Activated CD4-positive, alpha-beta memory T cell treated with anti-CD3 and anti-CD28 coated beads for 36 hours (primary cell): ENCODE measurements at regions of chr15 and their contacts with region 1.

Region 1: GRCh38 chr15:59917504-59918157 is 86.5 kb upstream of the FOXB1 start:
- DNase-seq: peak; percentile 85
- H3K4me3 Mint-ChIP-seq: no peak overlapping the region
- H3K27ac Mint-ChIP-seq: no peak overlapping the region
- H3K4me1 Mint-ChIP-seq: peaks cover 26% of the 10 kb centered on the region
- H3K27me3 Mint-ChIP-seq: peaks cover 3% of the 10 kb centered on the region

Region 2: DNA sequence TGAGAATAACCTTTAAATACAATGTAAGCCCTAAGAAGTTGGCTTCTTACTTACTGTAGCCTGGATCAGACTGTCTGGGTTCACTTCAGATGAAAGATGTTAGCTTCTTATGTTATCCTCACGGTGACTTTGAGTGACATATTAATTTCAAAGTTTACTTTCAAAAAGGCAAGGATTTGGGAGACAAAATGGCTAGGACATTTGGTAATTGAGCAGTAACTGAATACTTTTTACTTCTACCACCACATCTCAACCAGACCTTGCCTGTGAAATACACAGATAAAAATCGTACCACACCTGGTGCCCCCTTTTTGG is 192.5 kb before region 1 on chr15:
- CTCF ChIA-PET with region 1: interaction called, 27 read pairs
- POLR2A ChIA-PET with region 1: no interaction called
- intact Hi-C with region 1: loop called (anchors 5 kb)
- DNase-seq: no peak
- H3K4me3 Mint-ChIP-seq: no peak overlapping the region
- H3K27ac Mint-ChIP-seq: no peak overlapping the region
- H3K4me1 Mint-ChIP-seq: no peaks in the 10 kb centered on the region
- H3K27me3 Mint-ChIP-seq: peaks cover 7% of the 10 kb centered on the region

Region 3: GRCh38 chr15:59797756-59798604 is 119.7 kb before region 1 on chr15:
- CTCF ChIA-PET with region 1: interaction called, 3 read pairs
- POLR2A ChIA-PET with region 1: no interaction called
- intact Hi-C with region 1: loop called (anchors 5 kb)
- DNase-seq: no peak
- H3K4me3 Mint-ChIP-seq: peak overlapping the region; percentile 9
- H3K27ac Mint-ChIP-seq: peak overlapping the region; percentile 19
- H3K4me1 Mint-ChIP-seq: peaks cover 66% of the 10 kb centered on the region
- H3K27me3 Mint-ChIP-seq: no peaks in the 10 kb centered on the region

Region 4: GRCh38 chr15:59997070-59997701 is 79.6 kb after region 1 on chr15:
- CTCF ChIA-PET with region 1: interaction called, 27 read pairs
- POLR2A ChIA-PET with region 1: no interaction called
- intact Hi-C with region 1: loop called (anchors 2 kb)
- DNase-seq: peak; percentile 80
- H3K4me3 Mint-ChIP-seq: peak overlapping the region; percentile 68
- H3K27ac Mint-ChIP-seq: peak overlapping the region; percentile 14
- H3K4me1 Mint-ChIP-seq: peaks cover 51% of the 10 kb centered on the region
- H3K27me3 Mint-ChIP-seq: peaks cover 96% of the 10 kb centered on the region

Region 5: DNA sequence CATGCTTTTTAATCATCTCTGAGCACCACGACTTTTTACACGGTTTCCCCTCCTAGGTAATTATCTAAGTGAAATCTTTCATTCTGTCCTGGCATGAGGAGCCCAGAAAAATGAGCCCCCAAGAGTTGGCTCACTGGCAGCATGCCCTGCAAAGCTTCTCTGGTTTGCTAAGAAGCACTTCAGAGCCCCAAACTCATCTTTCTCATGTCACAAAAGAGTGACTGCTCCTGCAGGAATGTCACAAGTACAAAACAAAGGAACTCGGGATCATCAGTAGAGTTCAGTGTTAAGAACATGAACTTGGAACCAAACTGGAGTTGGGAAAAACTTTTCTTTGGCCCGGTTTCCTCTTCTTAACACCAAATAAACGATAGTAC is 210.4 kb after region 1 on chr15:
- CTCF ChIA-PET with region 1: interaction called, 4 read pairs
- POLR2A ChIA-PET with region 1: no interaction called
- intact Hi-C with region 1: loop called (anchors 1 kb)
- DNase-seq: no peak
- H3K4me3 Mint-ChIP-seq: peak overlapping the region; percentile 67
- H3K27ac Mint-ChIP-seq: peak overlapping the region; percentile 76
- H3K4me1 Mint-ChIP-seq: peaks cover 52% of the 10 kb centered on the region
- H3K27me3 Mint-ChIP-seq: no peaks in the 10 kb centered on the region

Region 6: DNA sequence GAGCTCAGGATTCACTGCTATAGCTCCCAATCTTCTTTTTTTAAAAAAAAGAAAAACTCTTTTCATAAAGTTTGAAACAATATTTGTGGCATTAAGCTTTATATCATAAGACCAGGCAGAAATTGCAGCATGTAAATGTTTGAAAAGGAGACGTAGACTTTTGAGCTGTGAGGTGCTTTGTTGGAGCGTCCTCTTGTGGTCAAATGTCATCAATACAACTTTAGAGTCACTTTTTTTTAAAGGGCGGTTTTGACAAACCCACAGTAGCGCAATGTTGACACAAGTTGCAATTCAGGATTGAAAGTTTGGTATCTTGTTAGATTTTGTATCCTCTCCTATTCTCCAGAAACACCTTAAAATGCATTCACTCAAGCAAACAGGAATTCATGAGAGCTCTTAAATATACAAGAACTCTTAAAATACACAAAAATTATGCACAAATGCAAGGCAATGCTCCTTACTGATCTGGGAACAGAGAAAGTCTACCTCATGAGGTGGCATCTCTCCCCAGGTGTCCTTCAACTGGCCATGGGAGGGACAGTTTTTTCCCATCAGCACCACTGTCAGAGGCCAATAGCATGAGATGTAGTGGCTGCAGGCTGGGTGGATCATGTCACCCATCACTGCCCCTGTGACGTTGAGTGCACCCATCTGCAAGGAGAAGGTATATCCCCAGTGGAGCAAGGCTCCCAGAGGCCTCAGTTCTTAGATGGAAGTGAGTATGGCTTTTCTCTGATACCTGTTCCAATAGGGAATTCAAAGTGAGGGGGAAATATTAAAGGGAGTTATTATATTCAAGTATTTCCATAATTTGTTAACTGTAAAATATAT is 409.4 kb after region 1 on chr15:
- CTCF ChIA-PET with region 1: interaction called, 74 read pairs
- POLR2A ChIA-PET with region 1: no interaction called
- intact Hi-C with region 1: loop called (anchors 1 kb)
- DNase-seq: peak; percentile 23
- H3K4me3 Mint-ChIP-seq: no peak overlapping the region
- H3K27ac Mint-ChIP-seq: no peak overlapping the region
- H3K4me1 Mint-ChIP-seq: peaks cover 2% of the 10 kb centered on the region
- H3K27me3 Mint-ChIP-seq: peaks cover 35% of the 10 kb centered on the region

Region 7: GRCh38 chr15:60507596-60508424 is 590.2 kb after region 1 on chr15:
- CTCF ChIA-PET with region 1: no interaction called
- POLR2A ChIA-PET with region 1: no interaction called
- intact Hi-C with region 1: loop called (anchors 10 kb)
- DNase-seq: peak; percentile 56
- H3K4me3 Mint-ChIP-seq: no peak overlapping the region
- H3K27ac Mint-ChIP-seq: peak overlapping the region; percentile 69
- H3K4me1 Mint-ChIP-seq: peaks cover 56% of the 10 kb centered on the region
- H3K27me3 Mint-ChIP-seq: no peaks in the 10 kb centered on the region